ENCODE measurements at regions of chr11 and their contacts with region 1.

Region 1: DNA sequence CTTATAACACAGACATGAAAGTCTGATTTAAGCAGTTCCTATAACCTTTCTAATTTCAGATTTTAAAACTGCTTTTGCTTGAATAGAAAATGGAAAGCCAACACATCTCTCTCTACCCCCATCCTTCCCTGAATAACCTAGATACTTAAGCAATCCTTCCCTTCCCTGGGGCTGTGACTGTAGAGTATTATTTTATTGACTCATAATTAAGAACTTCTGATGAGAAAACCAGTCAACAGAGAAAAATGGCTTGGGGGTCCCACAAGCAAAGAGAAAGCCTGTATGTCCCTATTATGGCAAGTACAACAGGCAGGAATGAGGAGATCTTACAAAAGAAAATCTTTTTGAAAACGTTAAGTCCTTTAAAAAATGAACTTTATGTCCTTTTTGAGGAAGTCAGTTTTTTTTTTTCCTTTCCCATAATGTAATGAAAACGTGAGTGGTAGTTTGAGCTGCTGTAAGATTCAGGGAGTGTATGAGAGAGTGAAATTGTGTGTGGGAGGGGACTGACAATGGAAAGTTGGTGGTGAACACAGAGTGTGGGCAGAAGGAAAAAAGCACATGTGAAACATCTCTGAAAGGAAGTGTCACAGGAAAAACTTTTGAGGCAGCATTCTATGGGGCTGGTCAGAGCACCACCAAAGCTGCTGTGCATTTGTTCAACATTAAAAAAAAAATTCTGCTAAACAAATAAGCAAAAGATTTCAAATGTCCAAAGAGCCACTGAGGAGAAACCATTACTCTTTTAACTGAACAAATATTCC is 154.6 kb downstream of the MAML2 start:
- DNase-seq: no peak
- ATAC-seq: peak in 2 of 4 experiments; percentile 52 to 53
- H3K4me3 ChIP-seq: no peak overlapping the region
- H3K4me3 Mint-ChIP-seq: peak overlapping the region in 2 of 3 donors; percentile 2 to 61
- H3K27ac ChIP-seq: no peak overlapping the region
- H3K27ac Mint-ChIP-seq: peak overlapping the region; percentile 28 to 67
- H3K4me1 ChIP-seq: peaks cover 19 to 32% of the 10 kb centered on the region in 2 experiments
- H3K4me1 Mint-ChIP-seq: peaks cover 79 to 81% (median 80%) of the 10 kb centered on the region in 3 donors
- H3K27me3 ChIP-seq: no peaks in the 10 kb centered on the region
- H3K27me3 Mint-ChIP-seq: no peaks in the 10 kb centered on the region

Region 2: DNA sequence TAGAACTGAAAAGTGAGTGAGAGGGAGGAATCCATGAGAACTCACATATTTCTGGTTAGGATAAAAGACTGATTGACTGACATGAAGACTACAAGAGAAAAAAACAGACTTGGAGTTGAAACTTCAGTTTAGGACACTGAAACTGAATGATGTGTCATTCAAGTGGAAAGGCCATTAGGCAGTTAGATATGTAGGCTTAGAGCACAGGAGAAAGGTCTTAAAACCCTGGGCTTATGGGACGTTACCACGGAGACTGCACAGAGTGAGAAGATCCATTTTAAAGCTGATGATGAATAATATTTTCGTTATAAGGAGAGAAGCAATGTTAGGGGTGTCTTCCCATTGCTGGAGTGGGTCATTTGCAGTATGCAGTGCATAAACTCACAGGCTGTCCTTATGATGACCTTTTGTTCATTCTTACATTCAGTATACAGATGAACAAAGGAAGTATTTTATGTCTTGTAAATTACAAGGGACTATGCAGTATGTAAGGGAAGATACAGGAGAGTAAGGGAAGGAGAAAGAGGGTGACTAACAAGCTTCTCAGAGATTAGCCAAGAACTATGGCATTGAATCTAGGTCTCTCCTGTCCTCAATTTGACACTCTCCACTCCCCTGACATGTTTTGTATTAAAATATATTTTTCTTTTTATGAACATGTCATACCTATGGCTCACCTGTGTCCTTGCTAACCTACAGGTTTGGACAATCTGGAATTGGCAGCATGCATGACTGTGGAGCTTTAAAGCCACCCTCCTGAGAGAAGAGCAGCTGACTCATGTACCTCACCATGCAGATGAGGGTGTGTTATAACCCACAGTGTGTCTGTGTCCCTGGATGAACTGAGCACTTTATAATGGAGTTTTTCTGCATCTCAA is 90.8 kb after region 1 on chr11:
- CTCF ChIA-PET with region 1: no interaction called
- POLR2A ChIA-PET with region 1: interaction called in 1 of 2 experiments, 11 read pairs
- DNase-seq: no peak
- ATAC-seq: peak; percentile 38 to 82 (median 73)
- H3K4me3 ChIP-seq: no peak overlapping the region
- H3K4me3 Mint-ChIP-seq: peak overlapping the region in 1 of 3 donors; percentile 40
- H3K27ac ChIP-seq: no peak overlapping the region
- H3K27ac Mint-ChIP-seq: peak overlapping the region; percentile 62 to 66
- H3K4me1 ChIP-seq: peaks cover 6 to 31% of the 10 kb centered on the region in 2 experiments
- H3K4me1 Mint-ChIP-seq: peaks cover 70 to 76% (median 71%) of the 10 kb centered on the region in 3 donors
- H3K27me3 ChIP-seq: no peaks in the 10 kb centered on the region
- H3K27me3 Mint-ChIP-seq: no peaks in the 10 kb centered on the region

Region 3: DNA sequence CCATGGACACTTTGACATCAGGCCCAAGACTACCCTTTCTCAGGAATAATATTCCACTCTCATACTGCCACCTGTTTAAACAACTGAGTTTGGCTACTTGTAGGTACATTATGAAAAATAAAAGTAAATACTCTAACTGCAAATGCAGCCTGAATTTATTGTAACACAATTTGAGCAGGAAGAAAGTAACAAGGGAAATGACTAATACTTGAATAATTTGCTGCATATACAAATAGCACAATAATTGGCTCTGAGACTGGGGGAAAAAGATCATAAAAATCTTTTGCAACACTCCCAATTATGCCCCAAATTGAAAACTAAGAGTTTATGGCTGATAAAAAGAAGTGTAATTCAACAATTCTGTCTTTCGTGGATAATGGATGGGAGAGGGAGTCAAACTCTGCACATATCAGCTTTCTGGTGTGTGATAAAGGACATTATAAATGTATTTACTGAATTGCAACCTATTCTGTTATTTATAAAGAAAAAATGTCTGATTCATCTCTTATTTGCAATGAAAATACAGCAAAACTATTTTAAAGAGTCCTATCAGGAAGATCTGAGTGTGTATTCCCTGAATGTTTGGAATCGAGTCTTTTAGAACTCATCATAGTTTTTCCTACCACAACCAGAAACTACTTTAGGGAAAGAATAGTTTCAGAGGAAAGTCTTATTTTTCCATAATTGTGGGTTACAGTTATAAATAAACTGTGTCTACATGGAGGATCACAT is 560.4 kb after region 1 on chr11:
- CTCF ChIA-PET with region 1: no interaction called
- POLR2A ChIA-PET with region 1: no interaction called
- DNase-seq: no peak
- ATAC-seq: no peak
- H3K4me3 ChIP-seq: no peak overlapping the region
- H3K4me3 Mint-ChIP-seq: no peak overlapping the region
- H3K27ac ChIP-seq: no peak overlapping the region
- H3K27ac Mint-ChIP-seq: no peak overlapping the region
- H3K4me1 ChIP-seq: no peaks in the 10 kb centered on the region
- H3K4me1 Mint-ChIP-seq: no peaks in the 10 kb centered on the region
- H3K27me3 ChIP-seq: no peaks in the 10 kb centered on the region
- H3K27me3 Mint-ChIP-seq: no peaks in the 10 kb centered on the region